ENCODE measurements at regions of chr22 and their contacts with region 1.

Region 1: GRCh38 chr22:16917144-16918003 is 90.6 kb downstream of the GAB4 start:
- DNase-seq: peak; percentile 75
- H3K4me3 Mint-ChIP-seq: no peak overlapping the region
- H3K27ac Mint-ChIP-seq: no peak overlapping the region
- H3K4me1 Mint-ChIP-seq: no peaks in the 10 kb centered on the region
- H3K27me3 Mint-ChIP-seq: peaks cover 27% of the 10 kb centered on the region

Region 2: DNA sequence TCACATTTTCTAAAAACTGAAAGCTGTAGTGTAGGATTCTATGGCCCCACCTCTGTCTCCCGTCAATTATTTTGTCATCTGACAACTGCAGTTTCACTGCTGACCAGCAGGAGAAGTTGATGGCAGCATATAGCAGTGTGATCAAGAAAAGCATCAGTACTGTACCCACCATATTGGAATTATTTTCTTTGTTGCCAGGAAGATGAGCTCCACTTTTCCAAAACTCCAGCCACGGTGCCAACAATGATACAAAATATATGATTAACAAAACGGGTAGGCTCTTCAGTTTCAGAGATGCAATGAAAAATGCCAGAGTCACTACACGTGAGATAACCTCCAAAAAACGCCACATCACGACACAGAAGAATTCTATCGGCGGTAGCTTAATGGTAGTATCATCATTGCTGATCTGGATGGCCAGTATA is 133.4 kb before region 1 on chr22:
- CTCF ChIA-PET with region 1: no interaction called
- POLR2A ChIA-PET with region 1: no interaction called
- intact Hi-C with region 1: no loop called
- DNase-seq: no peak
- H3K4me3 Mint-ChIP-seq: no peak overlapping the region
- H3K27ac Mint-ChIP-seq: no peak overlapping the region
- H3K4me1 Mint-ChIP-seq: no peaks in the 10 kb centered on the region
- H3K27me3 Mint-ChIP-seq: peaks cover 11% of the 10 kb centered on the region

Region 3: GRCh38 chr22:16838073-16838472 is 79.3 kb before region 1 on chr22:
- CTCF ChIA-PET with region 1: no interaction called
- POLR2A ChIA-PET with region 1: no interaction called
- intact Hi-C with region 1: no loop called
- DNase-seq: no peak
- H3K4me3 Mint-ChIP-seq: no peak overlapping the region
- H3K27ac Mint-ChIP-seq: no peak overlapping the region
- H3K4me1 Mint-ChIP-seq: no peaks in the 10 kb centered on the region
- H3K27me3 Mint-ChIP-seq: peaks cover 18% of the 10 kb centered on the region

Region 4: DNA sequence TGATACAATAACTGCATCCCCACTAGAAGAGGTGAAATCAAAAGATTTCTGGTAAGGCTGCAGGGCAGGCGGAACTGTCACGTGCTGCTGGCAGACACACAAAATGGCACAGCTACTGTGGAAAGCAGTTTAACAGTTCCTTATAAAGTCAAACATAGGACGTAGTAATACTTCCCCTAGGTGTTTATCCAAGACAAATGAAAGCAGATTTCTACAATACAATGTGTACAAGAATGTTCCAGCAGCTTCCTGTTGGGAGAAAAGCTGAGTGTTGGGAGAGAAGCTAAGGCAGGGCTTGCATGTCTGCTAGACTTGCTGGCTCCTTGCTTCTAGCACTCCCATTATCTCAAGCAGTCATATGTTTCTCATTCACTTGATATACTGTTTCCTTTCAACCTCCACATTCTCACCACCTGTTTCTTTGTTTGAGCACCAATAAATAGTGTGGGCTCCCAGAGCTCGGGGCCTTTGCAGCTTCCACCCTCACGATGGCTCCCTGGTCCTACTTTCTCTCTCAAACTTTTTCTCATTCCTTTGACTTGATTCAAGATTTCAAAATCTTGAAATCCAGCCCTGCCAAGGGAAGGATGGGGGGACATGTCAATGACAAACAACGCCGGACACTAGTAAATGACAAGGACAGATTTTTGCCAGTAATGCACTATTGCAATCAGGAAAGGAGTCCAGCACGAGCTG is 146.2 kb after region 1 on chr22:
- CTCF ChIA-PET with region 1: interaction called, 36 read pairs
- POLR2A ChIA-PET with region 1: no interaction called
- intact Hi-C with region 1: loop called (anchors 1 kb)
- DNase-seq: no peak
- H3K4me3 Mint-ChIP-seq: no peak overlapping the region
- H3K27ac Mint-ChIP-seq: no peak overlapping the region
- H3K4me1 Mint-ChIP-seq: peaks cover 2% of the 10 kb centered on the region
- H3K27me3 Mint-ChIP-seq: peaks cover 9% of the 10 kb centered on the region

Measured in activated CD4-positive, alpha-beta memory T cell treated with anti-CD3 and anti-CD28 coated beads for 36 hours (primary cell).